SK-N-SH (cell line): ENCODE measurements at regions of chr11 and their contacts with region 1.

Region 1: DNA sequence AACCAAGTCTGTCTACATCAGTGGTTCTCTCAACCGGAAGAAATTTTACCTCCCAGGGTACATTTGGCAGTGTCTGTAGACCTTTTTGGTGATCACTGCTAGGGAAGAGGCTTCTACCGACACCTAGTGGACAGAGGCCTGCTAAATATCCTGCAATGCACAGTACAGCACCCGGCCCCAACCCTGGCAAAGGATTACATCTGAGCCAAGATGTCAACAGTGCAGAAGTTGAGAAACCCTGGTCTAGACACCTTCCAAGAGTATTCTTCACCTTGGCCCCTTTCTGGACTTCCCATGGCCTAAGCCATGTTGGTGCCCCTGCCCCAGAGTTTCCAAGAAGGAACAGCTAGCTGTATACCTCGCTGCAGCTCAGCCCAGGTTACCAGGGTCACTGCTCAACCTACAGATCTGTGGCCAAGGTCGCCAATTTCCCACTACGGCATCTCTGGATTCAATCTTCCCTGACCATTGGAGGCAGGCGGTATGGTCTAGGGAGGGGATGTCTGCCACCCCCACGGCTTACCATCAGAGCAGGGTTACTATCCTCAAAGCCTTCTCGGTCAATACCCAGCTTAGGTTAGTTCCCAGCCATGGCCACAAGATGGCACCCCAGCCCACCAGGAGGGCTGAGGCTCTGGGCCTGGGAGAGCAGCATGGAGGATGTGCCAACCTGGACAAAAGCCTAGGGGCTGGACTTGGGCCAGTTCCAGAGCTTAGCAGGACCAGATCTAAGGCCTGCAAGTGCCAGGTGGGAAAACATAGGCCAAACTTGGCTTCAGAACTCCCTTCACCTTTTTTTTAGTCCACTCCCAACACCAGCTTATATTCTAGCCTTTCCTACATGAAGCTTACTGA is 3.7 kb upstream of the KCNC1 start:
- DNase-seq: peak; percentile 89
- H3K4me3 ChIP-seq: no peak overlapping the region; a peak in 1 of 4 replicates
- H3K27ac ChIP-seq: no peak overlapping the region
- H3K4me1 ChIP-seq: peaks cover 0 to 13% of the 10 kb centered on the region in 2 experiments; a peak in 1 of 4 replicates
- H3K27me3 ChIP-seq: no peaks in the 10 kb centered on the region; the same call in 1 of the 2 replicates
- CTCF ChIP-seq: peak; percentile 77
- EP300 ChIP-seq: peak in 1 of 2 experiments; percentile 10; a peak in 1 of 4 replicates
- RAD21 ChIP-seq: peak; percentile 98

Region 2: DNA sequence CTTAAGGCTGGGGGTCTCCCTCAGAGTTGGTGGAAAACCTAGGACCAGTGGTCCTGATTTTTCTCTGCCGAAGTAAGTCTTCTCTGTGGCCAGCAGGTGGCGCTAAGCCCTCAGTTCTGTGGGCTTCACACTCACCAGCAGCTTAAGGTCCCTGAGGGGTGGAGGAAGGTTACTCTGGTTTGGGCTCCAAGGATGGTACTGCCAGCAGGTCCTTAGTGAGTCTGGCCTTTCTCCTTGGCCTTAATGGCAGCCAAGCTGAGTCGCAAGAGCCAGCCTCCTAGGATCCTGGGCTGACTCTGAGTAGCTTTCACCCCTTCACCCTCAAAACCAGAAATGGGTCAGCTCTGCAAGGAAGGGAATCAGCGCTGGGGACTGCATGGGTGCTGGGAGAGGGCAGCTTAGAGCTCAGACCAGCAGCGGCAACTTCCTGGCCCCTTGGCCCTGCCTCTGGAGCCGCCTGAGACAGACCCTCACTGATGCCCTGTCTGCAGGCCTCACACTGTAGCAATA is 346.8 kb before region 1 on chr11:
- CTCF ChIA-PET with region 1: interaction called, 14 read pairs
- POLR2A ChIA-PET with region 1: no interaction called
- DNase-seq: peak; percentile 73
- H3K4me3 ChIP-seq: no peak overlapping the region
- H3K27ac ChIP-seq: no peak overlapping the region
- H3K4me1 ChIP-seq: peaks cover 0 to 4% of the 10 kb centered on the region in 2 experiments; a peak in 1 of 4 replicates
- H3K27me3 ChIP-seq: no peaks in the 10 kb centered on the region
- CTCF ChIP-seq: peak; percentile 90
- EP300 ChIP-seq: no peak
- RAD21 ChIP-seq: peak; percentile 91

Region 3: GRCh38 chr11:17686231-17686980 is 44.4 kb before region 1 on chr11:
- CTCF ChIA-PET with region 1: interaction called, 10 read pairs
- POLR2A ChIA-PET with region 1: no interaction called
- DNase-seq: peak; percentile 89
- H3K4me3 ChIP-seq: no peak overlapping the region
- H3K27ac ChIP-seq: no peak overlapping the region; a peak in 1 of 4 replicates
- H3K4me1 ChIP-seq: peaks cover 0 to 11% of the 10 kb centered on the region in 2 experiments; a peak in 1 of 4 replicates
- H3K27me3 ChIP-seq: no peaks in the 10 kb centered on the region
- CTCF ChIP-seq: no peak
- EP300 ChIP-seq: peak; percentile 25 to 93; a peak in 3 of 4 replicates
- RAD21 ChIP-seq: no peak; the same call in 1 of the 2 replicates

Region 4: GRCh38 chr11:17760102-17761029 is 29.5 kb after region 1 on chr11:
- CTCF ChIA-PET with region 1: interaction called, 35 read pairs
- POLR2A ChIA-PET with region 1: no interaction called
- DNase-seq: peak; percentile 68
- H3K4me3 ChIP-seq: no peak overlapping the region
- H3K27ac ChIP-seq: no peak overlapping the region
- H3K4me1 ChIP-seq: peaks cover 0 to 12% of the 10 kb centered on the region in 2 experiments; a peak in 2 of 4 replicates
- H3K27me3 ChIP-seq: 0 out of 2 replicates have a peak, but pooled peaks cover 7% of the 10 kb centered on the region
- CTCF ChIP-seq: peak; percentile 64
- EP300 ChIP-seq: no peak
- RAD21 ChIP-seq: peak; percentile 72

Region 5: GRCh38 chr11:17839973-17840611 is 109.3 kb after region 1 on chr11:
- CTCF ChIA-PET with region 1: interaction called, 50 read pairs
- POLR2A ChIA-PET with region 1: no interaction called
- DNase-seq: no peak
- H3K4me3 ChIP-seq: no peak overlapping the region
- H3K27ac ChIP-seq: no peak overlapping the region; a peak in 1 of 4 replicates
- H3K4me1 ChIP-seq: peaks cover under 1 to 2% of the 10 kb centered on the region in 2 experiments; a peak in 1 of 4 replicates
- H3K27me3 ChIP-seq: no peaks in the 10 kb centered on the region
- CTCF ChIP-seq: no peak
- EP300 ChIP-seq: no peak
- RAD21 ChIP-seq: no peak

Region 6: DNA sequence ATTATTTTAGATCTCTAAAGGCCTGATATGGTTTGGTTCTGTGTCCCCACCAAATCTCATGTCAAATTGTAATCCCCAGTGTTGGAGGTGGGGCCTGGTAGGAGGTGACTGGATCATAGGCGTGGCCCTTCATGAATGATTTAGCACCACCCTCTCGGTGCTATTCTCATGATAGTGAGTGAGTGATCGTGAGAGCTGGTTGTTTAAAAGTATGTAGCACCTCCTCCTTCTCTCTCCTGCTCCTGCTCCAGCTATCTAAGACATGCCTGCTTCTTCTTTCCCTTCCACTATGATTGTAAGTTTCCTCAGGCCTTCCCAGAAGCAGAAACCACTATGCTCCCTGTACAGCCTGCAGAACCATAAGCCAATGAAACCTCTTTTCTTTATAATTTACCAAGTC is 167.9 kb after region 1 on chr11:
- CTCF ChIA-PET with region 1: interaction called, 174 read pairs
- POLR2A ChIA-PET with region 1: interaction called, 3 read pairs
- DNase-seq: no peak
- H3K4me3 ChIP-seq: no peak overlapping the region
- H3K27ac ChIP-seq: no peak overlapping the region
- H3K4me1 ChIP-seq: peaks cover 0 to 26% of the 10 kb centered on the region in 2 experiments; a peak in 2 of 4 replicates
- H3K27me3 ChIP-seq: no peaks in the 10 kb centered on the region
- CTCF ChIP-seq: no peak
- EP300 ChIP-seq: no peak
- RAD21 ChIP-seq: no peak

Region 7: GRCh38 chr11:17932472-17932871 is 201.6 kb after region 1 on chr11:
- CTCF ChIA-PET with region 1: interaction called, 12 read pairs
- POLR2A ChIA-PET with region 1: no interaction called
- DNase-seq: no peak
- H3K4me3 ChIP-seq: no peak overlapping the region; a peak in 1 of 4 replicates
- H3K27ac ChIP-seq: no peak overlapping the region
- H3K4me1 ChIP-seq: peaks cover 0 to 3% of the 10 kb centered on the region in 2 experiments; a peak in 3 of 4 replicates
- H3K27me3 ChIP-seq: no peaks in the 10 kb centered on the region
- CTCF ChIP-seq: peak; percentile 13; the same call in 1 of the 2 replicates
- EP300 ChIP-seq: no peak
- RAD21 ChIP-seq: no peak